OCI-LY7 (cell line): ENCODE measurements at regions of chrX and their contacts with region 1.

Region 1: DNA sequence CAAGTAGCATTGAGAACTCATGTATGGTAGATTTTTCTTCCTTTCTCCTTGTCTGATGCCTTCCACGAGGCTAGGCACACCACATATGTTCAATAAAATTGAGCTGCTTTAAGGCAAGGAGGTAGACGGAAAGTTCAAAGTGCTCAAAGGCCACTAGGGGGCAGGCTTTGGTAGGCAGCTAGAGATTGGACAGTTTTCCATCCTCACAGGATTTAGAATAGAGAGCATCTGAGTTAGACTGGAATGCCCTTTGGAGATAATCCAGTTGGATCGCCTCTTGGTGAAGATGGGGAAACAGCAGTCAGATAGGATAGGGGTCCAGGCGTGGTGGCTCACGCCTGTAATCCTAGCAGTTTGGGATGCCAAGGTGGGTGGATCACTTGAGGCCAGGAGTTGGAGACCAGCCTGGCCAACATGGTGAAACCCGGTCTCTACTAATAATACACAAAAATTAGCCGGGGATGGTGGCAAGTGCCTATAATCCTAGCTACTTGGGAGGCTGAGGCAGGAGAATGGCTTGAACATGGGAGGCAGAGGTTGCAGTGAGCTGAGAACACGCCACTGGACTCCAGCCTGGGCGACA is 30.4 kb downstream of the ELF4 start:
- DNase-seq: peak; percentile 65
- H3K4me3 ChIP-seq: no peak overlapping the region
- H3K27ac ChIP-seq: no peak overlapping the region
- H3K4me1 ChIP-seq: peaks cover 37% of the 10 kb centered on the region
- CTCF ChIP-seq: peak; percentile 83

Region 2: DNA sequence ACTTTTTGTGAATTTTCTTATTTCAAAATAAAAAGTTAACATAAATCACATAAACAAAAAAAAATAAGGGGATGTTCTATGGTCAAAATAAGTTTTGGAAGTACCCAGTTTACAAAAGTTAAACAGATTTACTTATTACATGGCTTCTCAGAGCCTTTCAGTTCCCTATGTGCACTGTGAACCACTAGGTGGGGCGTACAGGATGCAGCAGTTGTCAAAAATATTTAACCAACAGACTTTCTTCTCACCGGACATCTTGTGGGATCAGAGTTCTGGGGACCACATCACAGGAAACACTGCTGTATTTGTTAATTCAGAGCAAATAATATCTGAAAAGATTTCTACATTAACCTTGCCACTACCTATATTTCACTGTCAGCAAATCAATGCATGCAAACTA is 630.8 kb before region 1 on chrX:
- CTCF ChIA-PET with region 1: no interaction called
- POLR2A ChIA-PET with region 1: no interaction called
- intact Hi-C with region 1: no loop called
- DNase-seq: no peak
- H3K4me3 ChIP-seq: no peak overlapping the region
- H3K27ac ChIP-seq: no peak overlapping the region
- H3K4me1 ChIP-seq: no peaks in the 10 kb centered on the region
- CTCF ChIP-seq: peak; percentile 43; the same call in 1 of the 2 replicates

Region 3: DNA sequence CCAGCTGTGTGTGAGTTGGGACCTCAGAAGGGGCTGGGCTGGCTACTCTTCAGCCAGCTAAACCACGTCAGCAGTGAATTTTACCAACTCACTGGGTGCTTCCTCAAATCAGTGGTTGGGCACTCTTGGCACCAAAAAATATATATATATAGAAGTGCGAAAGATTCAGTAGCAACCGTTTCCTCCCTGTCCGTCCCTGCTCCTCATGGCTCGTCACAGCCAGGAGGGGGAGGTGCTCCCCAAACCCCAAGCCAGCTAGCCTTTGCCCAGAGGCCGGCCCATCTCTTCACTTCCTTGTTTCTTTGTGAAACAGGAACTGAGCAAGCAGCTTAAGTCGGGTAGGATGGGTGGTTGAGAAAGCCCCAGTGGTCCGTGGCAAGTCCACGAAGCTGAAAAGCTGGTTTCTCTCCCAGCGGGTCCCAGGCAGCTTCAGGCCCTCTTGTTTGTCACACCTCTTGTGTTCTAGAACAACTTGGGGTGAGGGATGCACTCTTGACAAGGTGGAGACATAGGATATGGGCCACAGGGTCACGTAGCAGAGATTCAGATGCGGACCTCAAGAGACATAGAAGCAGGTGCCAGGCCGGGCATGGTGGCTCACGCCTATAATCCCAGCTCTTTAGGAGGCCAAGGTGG is 307.0 kb before region 1 on chrX:
- CTCF ChIA-PET with region 1: no interaction called
- POLR2A ChIA-PET with region 1: no interaction called
- intact Hi-C with region 1: loop called (anchors 10 kb)
- DNase-seq: peak; percentile 92
- H3K4me3 ChIP-seq: peak overlapping the region; percentile 21
- H3K27ac ChIP-seq: peak overlapping the region; percentile 99
- H3K4me1 ChIP-seq: peaks cover 97% of the 10 kb centered on the region
- CTCF ChIP-seq: peak; percentile 25; the same call in 1 of the 2 replicates

Region 4: GRCh38 chrX:130100180-130100579 is 20.3 kb after region 1 on chrX:
- CTCF ChIA-PET with region 1: no interaction called
- POLR2A ChIA-PET with region 1: no interaction called
- intact Hi-C with region 1: no loop called
- DNase-seq: no peak
- H3K4me3 ChIP-seq: no peak overlapping the region
- H3K27ac ChIP-seq: no peak overlapping the region
- H3K4me1 ChIP-seq: no peaks in the 10 kb centered on the region
- CTCF ChIP-seq: no peak

Region 5: DNA sequence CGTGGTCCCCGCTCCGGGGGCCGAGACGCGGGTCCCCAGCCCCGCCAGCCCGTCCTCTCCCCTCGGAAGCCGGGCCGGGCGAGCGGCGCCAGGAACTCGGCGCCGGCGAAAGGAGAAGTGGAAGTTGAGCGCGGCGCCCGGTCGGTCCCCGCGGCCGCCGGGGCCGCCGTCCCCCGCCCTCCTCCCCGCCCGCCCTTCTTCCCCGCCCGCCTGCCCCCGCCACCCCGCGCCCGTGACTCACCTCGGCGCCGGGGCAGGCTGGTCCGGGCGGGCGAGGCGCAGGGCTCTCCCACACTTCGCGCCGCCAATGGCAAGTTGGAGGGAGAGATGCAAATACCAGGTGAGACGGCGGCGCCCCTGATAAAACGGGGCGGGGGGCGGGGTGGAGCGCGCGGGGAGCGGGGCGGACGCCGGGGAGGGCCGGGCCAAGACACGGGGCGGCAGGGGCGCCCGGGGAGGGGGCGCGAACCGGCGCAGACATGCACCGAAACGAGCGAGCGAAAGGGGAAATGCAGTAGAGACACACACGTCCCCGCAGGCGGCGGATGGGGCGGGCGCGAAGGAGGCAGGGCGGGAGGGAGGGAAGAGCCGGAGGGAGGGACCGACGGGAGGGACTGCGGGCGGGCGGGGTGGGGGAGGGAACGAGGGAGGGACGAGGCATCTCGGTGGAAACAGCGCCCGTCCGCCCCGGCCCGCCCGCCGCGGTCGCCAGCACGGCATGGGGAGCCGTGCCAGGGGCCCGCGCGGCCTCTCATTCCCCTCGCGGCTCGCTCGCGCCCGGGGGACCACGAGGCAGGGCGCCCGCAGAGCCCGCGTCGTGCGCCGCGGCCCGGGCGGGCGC is 30.7 kb after region 1 on chrX and contains the start of gene ELF4:
- CTCF ChIA-PET with region 1: interaction called, 5 read pairs
- POLR2A ChIA-PET with region 1: interaction called, 12 read pairs
- intact Hi-C with region 1: loop called (anchors 1 kb)
- DNase-seq: peak; percentile 64
- H3K4me3 ChIP-seq: peak within 1 kb of the TSS; percentile 85
- H3K27ac ChIP-seq: peak within 1 kb of the TSS; percentile 74
- H3K4me1 ChIP-seq: peaks cover 19% of the 10 kb centered on the region
- CTCF ChIP-seq: no peak
- total RNA-seq, gene ELF4: 13.4 and 15.0 TPM in 2 replicates

Region 6: GRCh38 chrX:130120746-130121504 is 41.0 kb after region 1 on chrX:
- CTCF ChIA-PET with region 1: no interaction called
- POLR2A ChIA-PET with region 1: interaction called, 4 read pairs
- intact Hi-C with region 1: loop called (anchors 1 kb)
- DNase-seq: peak; percentile 56
- H3K4me3 ChIP-seq: peak overlapping the region; percentile 59
- H3K27ac ChIP-seq: no peak overlapping the region
- H3K4me1 ChIP-seq: peaks cover 13% of the 10 kb centered on the region
- CTCF ChIP-seq: peak; percentile 74

Region 7: GRCh38 chrX:130165703-130166502 is 86.0 kb after region 1 on chrX and contains the start of gene AIFM1:
- CTCF ChIA-PET with region 1: interaction called, 4 read pairs
- POLR2A ChIA-PET with region 1: interaction called, 3 read pairs
- intact Hi-C with region 1: loop called (anchors 2 kb)
- DNase-seq: peak; percentile 94
- H3K4me3 ChIP-seq: peak within 1 kb of the TSS; percentile 77
- H3K27ac ChIP-seq: peak within 1 kb of the TSS; percentile 87
- H3K4me1 ChIP-seq: peaks cover 28% of the 10 kb centered on the region
- CTCF ChIP-seq: no peak
- total RNA-seq, gene AIFM1: 23.1 and 28.8 TPM in 2 replicates

Region 8: DNA sequence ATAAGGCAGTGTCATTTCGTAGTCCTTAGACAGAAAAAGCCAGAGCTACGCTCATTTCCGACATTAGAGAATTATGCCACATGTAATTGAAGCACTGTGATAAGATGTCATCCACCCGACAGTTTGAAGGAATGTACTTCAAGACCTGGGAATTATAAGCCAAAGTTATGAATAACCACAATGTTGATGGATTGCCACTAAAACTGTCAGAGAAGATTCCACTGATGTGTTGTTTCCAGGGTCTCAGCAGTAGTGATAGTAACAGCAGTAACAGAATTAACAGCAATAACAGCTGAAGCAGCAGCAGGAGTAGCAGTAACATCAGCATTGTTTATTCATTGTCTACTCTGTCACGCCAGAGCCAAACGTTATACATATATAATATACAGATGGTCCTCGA is 116.6 kb after region 1 on chrX:
- CTCF ChIA-PET with region 1: interaction called, 3 read pairs
- POLR2A ChIA-PET with region 1: no interaction called
- intact Hi-C with region 1: loop called (anchors 1 kb)
- DNase-seq: no peak
- H3K4me3 ChIP-seq: no peak overlapping the region
- H3K27ac ChIP-seq: no peak overlapping the region
- H3K4me1 ChIP-seq: peaks cover 6% of the 10 kb centered on the region
- CTCF ChIP-seq: no peak

Region 9: GRCh38 chrX:130347321-130347720 is 267.4 kb after region 1 on chrX:
- CTCF ChIA-PET with region 1: no interaction called
- POLR2A ChIA-PET with region 1: no interaction called
- intact Hi-C with region 1: no loop called
- DNase-seq: no peak
- H3K4me3 ChIP-seq: no peak overlapping the region
- H3K27ac ChIP-seq: no peak overlapping the region
- H3K4me1 ChIP-seq: peaks cover 28% of the 10 kb centered on the region
- CTCF ChIP-seq: no peak